Activated CD8-positive, alpha-beta T cell treated with anti-CD3 and anti-CD28 coated beads, Interleukin-2, amount 10 ng/mL, durations not matched to agents 7 days and 5 days (primary cell): ENCODE measurements at regions of chr1 and their contacts with region 1.

Region 1: GRCh38 chr1:116881879-116882520 is 27.7 kb upstream of the PTGFRN start:
- DNase-seq: peak; percentile 65
- ATAC-seq: peak; percentile 35
- H3K4me3 Mint-ChIP-seq: no peak overlapping the region
- H3K27ac Mint-ChIP-seq: no peak overlapping the region
- H3K4me1 Mint-ChIP-seq: peaks cover 9% of the 10 kb centered on the region
- H3K27me3 Mint-ChIP-seq: no peaks in the 10 kb centered on the region

Region 2: GRCh38 chr1:116826818-116827606 is 55.0 kb before region 1 on chr1:
- CTCF ChIA-PET with region 1: interaction called, 10 read pairs
- POLR2A ChIA-PET with region 1: no interaction called
- DNase-seq: peak; percentile 78
- ATAC-seq: peak; percentile 88
- H3K4me3 Mint-ChIP-seq: peak overlapping the region; percentile 52
- H3K27ac Mint-ChIP-seq: peak overlapping the region; percentile 94
- H3K4me1 Mint-ChIP-seq: peaks cover 49% of the 10 kb centered on the region
- H3K27me3 Mint-ChIP-seq: no peaks in the 10 kb centered on the region